ENCODE measurements at regions of chr4 and their contacts with region 1.

Region 1: DNA sequence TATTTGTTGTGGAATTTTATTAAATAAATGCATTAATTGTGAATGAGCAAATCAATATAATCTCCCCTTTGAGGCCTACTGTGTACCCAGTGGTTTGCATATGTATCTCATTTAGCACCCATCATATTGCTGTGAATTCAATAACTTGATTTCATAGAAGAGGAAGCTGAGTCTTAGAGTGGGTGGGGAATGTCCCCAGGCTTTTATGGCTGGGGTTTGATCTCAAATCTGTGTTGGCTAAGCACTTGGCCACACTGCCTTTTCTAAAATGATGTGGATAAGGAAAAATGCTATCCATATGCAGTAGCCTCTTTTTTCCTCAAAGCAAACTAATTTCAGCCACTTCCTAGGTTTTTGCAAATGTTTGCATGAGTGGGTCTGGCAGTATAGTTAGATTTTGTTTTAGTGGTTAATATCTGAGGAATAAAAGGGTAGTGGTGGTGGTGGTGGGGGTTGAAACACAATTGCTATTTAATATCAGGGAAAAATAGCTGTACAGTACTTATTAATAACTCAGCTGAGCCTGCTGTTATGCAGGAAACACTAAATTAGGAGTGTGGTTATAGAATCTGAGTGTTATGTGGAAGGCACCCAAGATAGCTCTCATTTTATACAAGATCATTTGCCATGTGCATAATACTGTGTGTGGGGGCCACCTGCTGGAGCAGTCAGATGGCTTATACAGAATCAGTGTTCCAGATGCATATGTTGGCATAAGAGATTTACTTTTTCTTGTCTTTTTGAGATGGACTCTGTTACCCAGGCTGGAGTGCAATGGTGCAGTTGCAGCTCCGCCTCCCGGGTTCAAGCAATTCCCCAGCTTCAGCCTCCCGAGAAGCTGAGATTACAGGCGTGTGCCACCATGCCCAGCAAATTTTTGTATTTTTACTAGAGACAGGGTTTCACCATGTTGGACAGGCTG is 108.0 kb downstream of the TMEM131L start:
- DNase-seq: peak; percentile 85
- ATAC-seq: peak; percentile 97
- H3K4me3 Mint-ChIP-seq: no peak overlapping the region
- H3K27ac Mint-ChIP-seq: no peak overlapping the region
- H3K4me1 Mint-ChIP-seq: peaks cover 47% of the 10 kb centered on the region
- H3K27me3 Mint-ChIP-seq: no peaks in the 10 kb centered on the region

Region 2: DNA sequence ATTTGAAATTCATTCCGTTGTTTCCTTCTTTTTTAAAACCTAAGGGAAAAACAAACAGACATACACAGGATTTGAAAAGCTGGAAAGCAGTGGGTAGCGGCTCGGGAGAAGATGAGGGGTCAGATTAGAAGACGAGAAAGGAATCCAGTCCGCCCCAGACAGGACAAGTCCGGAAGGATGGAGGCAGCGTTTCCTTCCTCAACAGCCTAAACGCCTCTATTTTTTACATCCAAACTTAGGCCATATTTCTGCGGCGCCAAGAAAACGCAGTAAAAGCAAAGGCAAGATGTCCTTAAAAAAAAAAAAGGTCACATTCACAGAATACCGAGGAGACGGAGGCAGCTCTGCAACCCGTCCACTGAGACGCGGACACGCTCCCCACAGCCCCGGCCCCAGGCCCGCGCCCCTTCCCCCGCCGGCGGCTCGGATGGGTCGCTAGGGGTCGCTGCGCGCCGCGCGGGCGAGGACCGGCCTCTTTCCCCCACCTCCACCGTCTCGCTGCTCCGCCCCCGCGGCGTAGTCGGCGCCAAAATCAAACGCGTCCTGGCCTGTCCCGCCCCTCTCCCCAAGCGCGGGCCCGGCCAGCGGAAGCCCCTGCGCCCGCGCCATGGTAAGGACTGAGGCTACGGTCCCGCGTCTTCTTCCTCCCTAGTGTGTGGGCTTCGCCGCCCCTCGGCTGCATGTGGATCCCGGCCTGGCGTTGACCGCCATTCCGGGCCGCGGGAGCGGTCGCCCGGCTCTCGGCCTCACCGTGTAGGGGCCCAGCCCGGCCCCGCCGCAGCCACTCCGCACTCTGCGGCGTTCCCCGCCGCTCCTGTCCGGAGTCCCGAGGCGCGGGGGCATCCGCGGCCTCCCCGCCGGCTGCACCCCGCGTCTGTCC is 229.8 kb before region 1 on chr4 and contains the start of gene MND1:
- CTCF ChIA-PET with region 1: interaction called, 20 read pairs
- DNase-seq: peak; percentile 94
- ATAC-seq: peak; percentile 96
- H3K4me3 Mint-ChIP-seq: peak within 1 kb of the TSS; percentile 85
- H3K27ac Mint-ChIP-seq: peak within 1 kb of the TSS; percentile 90
- H3K4me1 Mint-ChIP-seq: peaks cover 41% of the 10 kb centered on the region
- H3K27me3 Mint-ChIP-seq: peaks cover 33% of the 10 kb centered on the region
- total RNA-seq, gene MND1: 25.2 to 33.6 TPM

Region 3: DNA sequence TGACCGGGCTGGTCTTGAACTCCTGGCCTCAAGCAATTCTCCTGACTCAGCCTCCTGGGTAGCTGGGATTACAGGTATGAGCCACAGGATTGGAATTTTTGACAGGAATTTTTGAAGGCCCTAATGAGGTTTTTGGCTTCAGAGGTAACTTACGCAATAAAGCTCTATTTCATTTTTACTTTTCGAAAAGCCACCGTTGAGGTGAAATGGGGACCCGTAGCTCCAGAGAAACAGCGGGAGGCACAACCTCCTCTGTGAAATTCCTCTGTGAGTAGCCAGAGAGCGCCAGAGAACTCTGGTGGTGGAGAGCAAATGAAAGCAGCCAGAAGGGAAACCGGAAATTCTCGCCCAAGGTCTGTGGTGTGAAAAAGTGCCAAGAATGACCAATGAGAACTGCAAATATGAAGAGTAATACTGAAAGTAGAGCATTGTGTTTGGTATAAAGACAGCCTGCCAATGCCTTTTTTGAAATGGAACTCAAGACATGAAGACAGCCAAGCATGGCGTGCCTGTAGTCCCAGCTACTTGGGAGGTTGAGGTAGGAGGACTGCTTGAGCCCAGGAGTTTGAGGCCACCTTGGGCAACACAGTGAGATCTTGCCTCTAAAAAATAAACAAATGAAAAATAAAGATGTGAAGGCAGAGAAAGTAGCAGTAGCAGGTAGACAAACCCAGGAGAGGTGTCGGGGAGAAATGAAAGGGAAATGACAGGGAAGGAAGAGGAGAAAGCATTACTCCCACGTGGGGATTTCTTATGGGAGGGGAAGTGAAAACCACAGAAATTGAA is 141.0 kb before region 1 on chr4:
- CTCF ChIA-PET with region 1: interaction called, 61 read pairs
- DNase-seq: peak; percentile 93
- ATAC-seq: peak; percentile 93
- H3K4me3 Mint-ChIP-seq: peak overlapping the region; percentile 77
- H3K27ac Mint-ChIP-seq: peak overlapping the region; percentile 96
- H3K4me1 Mint-ChIP-seq: peaks cover 53% of the 10 kb centered on the region
- H3K27me3 Mint-ChIP-seq: peaks cover 6% of the 10 kb centered on the region

Region 4: DNA sequence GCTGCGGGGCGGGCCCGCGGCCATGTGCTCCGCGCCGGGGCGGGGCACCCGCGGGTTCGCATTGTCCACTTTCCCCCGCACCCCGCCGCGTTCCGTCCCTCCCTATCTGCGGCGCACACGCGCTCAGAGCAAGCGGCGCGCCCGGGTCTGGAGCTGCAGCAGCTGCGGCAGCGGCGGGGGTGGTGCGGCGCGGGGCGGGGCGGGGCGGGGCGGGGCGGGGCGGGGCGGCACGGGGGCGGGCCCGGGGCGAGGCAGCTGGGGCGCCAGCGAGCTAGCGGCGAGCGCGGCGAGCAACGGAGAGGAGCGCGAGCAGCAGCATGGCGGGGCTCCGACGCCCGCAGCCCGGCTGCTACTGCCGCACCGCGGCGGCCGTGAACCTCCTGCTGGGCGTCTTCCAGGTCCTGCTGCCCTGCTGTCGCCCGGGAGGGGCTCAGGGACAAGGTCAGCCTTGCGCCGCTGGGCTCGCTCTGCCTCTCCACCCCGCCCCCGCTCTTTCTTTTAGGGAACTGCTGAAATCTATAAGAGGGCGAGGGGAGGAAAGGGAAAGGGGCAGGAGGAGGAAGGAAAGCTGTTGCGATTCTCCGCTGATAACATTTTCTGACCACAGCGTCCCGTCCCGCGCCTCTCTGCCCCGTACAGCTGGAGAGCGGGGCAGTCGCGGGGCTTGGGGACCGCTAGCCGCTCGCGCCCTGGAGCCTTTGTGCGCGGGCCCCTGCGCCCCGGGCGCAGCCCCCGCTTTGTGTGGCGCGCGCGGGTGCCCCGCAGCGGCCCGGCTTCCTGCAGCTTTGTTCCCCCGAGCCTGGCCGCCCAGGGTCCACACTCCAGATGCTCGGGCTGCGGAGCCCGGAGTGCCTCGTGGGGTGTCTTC is 107.8 kb before region 1 on chr4 and contains the start of gene TMEM131L:
- CTCF ChIA-PET with region 1: interaction called, 75 read pairs
- DNase-seq: peak; percentile 74
- ATAC-seq: peak; percentile 80
- H3K4me3 Mint-ChIP-seq: peak within 1 kb of the TSS; percentile 88
- H3K27ac Mint-ChIP-seq: peak within 1 kb of the TSS; percentile 92
- H3K4me1 Mint-ChIP-seq: peaks cover 46% of the 10 kb centered on the region
- H3K27me3 Mint-ChIP-seq: peaks cover 5% of the 10 kb centered on the region
- total RNA-seq, gene TMEM131L: 29.2 to 34.0 TPM

Region 5: DNA sequence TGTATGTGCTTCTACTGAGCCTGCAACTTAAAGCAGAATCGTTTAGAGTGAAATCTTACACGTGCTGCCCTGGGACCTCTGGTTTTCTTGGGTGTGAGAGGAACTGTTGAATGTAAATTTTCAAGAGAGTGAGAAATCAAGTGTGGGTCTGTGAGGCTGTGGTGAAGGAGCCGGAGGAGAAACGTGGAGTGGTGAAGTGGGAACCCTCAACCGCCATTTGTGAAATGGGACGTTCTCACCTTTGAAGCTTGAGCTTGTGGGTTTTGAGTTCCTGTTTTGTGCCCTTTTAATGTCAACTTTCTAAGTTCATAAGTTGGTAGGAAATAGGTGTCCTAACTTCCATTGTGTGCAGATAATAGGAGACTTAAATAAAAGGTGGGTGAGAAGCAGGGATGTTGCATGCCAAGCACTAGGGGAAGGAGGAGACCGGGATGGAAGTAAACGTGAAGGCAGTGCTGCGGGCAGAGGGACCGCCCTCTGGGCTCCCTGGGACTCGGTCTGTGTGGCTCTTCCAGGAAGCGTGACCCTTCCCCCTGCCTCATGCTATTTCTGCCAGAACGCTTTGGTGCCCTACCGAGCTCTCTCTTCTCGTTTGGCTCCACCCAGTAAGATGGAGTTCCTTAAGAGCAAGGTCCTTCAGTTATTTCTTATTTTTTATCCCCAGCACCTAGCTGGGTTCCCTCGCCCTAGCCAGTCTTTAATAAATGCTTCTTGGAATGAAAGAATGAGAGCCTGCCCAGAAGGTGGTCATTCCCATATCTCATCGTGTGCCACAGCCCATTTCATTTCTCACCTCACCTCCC is 51.9 kb before region 1 on chr4:
- CTCF ChIA-PET with region 1: interaction called, 13 read pairs
- DNase-seq: peak; percentile 90
- ATAC-seq: peak; percentile 87
- H3K4me3 Mint-ChIP-seq: peak overlapping the region; percentile 56
- H3K27ac Mint-ChIP-seq: peak overlapping the region; percentile 93
- H3K4me1 Mint-ChIP-seq: peaks cover 91% of the 10 kb centered on the region
- H3K27me3 Mint-ChIP-seq: no peaks in the 10 kb centered on the region

Measured in activated CD8-positive, alpha-beta memory T cell treated with anti-CD3 and anti-CD28 coated beads, Interleukin-2, amount 10 ng/mL, durations not matched to agents 7 days and 5 days (primary cell).